ENCODE measurements at regions of chr3 and their contacts with region 1.

Region 1: DNA sequence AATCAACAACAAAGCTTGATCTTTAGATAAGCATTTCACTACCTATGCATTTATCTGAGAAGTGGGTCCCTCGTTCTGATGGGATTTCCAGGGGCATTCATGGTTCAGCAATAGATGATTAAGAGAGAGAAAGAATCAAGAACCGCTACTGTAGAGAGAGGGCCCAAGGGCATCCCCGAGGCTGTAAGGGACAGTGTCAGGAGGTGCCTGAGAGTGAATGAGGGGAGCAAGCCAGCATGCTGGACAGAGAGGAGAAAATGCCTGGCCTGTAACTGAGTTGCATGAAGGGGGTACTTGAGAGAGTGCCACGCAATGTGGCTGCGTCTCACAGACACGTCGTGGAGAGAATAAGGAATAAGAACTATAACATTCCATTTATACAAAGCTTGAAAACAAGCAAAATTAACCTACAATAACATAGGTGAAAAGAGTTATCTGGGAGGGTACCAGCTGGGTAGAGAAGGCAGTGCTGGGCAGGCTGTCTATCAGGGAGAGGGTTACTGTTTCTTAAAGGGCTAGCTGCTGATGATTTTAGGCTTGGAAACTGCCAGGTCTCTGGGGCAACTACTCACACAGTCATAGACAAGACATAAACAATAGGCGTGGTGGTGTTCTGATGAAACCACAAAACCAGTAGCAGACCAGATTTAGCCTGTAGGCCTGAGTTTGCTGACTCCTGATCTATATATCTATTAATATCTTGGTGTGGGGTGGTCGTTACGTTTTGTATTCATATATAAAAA is 374.6 kb upstream of the CFAP20DC start:
- DNase-seq: peak; percentile 71
- H3K4me3 Mint-ChIP-seq: peak overlapping the region; percentile 1
- H3K27ac Mint-ChIP-seq: peak overlapping the region; percentile 73
- H3K4me1 Mint-ChIP-seq: peaks cover 52% of the 10 kb centered on the region
- H3K27me3 Mint-ChIP-seq: no peaks in the 10 kb centered on the region

Region 2: DNA sequence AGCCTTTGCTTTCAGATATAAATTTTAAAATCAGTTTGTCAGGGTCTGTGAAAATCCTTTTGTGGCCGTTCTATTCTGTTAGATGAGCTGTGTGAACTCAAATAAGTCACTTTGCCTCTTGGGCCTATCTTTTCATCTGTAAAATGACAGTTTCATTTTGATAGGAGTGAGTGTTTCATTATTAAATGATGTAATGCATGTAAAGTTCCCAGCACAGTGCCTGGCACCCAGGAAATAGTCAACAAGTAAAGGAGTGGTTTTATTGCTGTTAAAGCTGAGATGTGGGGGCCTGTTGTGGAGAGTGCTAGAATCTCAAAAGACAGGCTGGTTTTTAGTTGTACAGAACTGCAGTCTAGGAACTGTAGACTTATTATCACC is 19.8 kb after region 1 on chr3:
- intact Hi-C with region 1: loop called (anchors 1 kb)
- DNase-seq: peak; percentile 73
- H3K4me3 Mint-ChIP-seq: peak overlapping the region; percentile 73
- H3K27ac Mint-ChIP-seq: peak overlapping the region; percentile 90
- H3K4me1 Mint-ChIP-seq: peaks cover 48% of the 10 kb centered on the region
- H3K27me3 Mint-ChIP-seq: no peaks in the 10 kb centered on the region

Region 3: GRCh38 chr3:59480486-59480995 is 56.1 kb after region 1 on chr3:
- intact Hi-C with region 1: loop called (anchors 1 kb)
- DNase-seq: peak; percentile 66
- H3K4me3 Mint-ChIP-seq: peak overlapping the region; percentile 67
- H3K27ac Mint-ChIP-seq: peak overlapping the region; percentile 83
- H3K4me1 Mint-ChIP-seq: peaks cover 26% of the 10 kb centered on the region
- H3K27me3 Mint-ChIP-seq: no peaks in the 10 kb centered on the region

Region 4: DNA sequence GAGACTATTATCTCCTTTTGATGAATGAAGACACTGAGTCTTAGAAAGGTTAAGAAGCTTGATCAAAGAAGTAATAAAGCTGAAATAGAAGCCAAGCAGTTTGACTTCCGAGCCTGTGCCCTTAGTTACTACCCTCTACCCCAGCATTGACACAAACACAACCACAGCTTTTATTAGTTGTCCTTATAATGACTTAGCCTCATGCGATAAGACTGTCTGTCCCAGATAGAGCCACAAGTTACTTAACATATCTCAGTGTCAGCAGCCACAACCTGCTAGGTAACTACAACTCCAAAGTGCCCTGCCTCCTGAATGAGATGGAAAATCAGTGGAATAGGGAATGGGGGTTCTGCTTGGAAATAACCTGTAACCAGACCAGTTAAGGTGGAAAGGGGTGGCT is 407.0 kb after region 1 on chr3:
- intact Hi-C with region 1: no loop called
- DNase-seq: no peak
- H3K4me3 Mint-ChIP-seq: no peak overlapping the region
- H3K27ac Mint-ChIP-seq: no peak overlapping the region
- H3K4me1 Mint-ChIP-seq: no peaks in the 10 kb centered on the region
- H3K27me3 Mint-ChIP-seq: no peaks in the 10 kb centered on the region

Measured in activated CD4-positive, alpha-beta T cell treated with anti-CD3 and anti-CD28 coated beads, Interleukin-2, amount 10 ng/mL, durations not matched to agents 24 days and 14 days (primary cell).